Pancreas (tissue), 10 donors: ENCODE measurements at regions of chr2 and their contacts with region 1.

Region 1: DNA sequence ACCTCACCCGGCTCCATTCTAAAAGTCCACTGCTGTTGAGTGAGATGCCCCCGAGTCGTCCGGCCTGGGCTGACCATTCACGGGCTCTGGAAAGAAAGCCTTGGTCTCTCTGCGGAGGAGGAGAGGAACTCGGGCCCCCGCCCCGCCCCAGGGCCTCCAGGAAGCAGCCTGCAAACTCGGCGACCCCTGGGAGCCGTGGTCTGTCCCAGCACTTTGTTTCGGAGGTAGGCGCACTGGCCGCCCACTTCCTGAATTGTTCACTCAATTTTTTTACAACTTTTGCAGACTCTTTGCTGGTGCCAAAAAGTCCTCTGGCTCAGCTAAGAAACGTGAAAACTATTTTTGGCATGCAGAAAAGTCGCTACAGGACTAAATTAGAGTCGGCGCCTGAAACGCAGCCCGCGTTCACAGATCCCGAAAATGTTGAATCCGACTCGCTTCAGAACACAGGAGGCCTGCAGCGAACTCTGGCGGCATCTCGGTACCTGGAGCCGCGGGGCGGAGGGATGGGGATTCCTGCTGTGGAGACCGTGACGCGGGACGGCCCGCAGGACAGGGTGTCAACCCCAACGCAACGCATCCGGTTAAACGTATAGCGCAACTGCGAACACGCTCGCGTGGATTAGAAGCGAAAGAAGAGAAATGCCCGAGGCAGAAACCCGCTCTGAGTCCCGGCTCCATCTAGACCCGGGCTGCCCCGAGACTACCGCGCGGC is 1.5 kb downstream of the PXDN start:
- DNase-seq: peak in 2 of 6 donors; percentile 36 to 38
- ATAC-seq: peak; percentile 30 to 83 (median 72)
- H3K4me3 ChIP-seq: peak overlapping the region; percentile 18 to 50 (median 20)
- H3K27ac ChIP-seq: peak overlapping the region in 2 of 4 donors; percentile 59 to 63
- H3K4me1 ChIP-seq: no peaks in the 10 kb centered on the region
- H3K27me3 ChIP-seq: peaks cover 0 to 6% (median 0%) of the 10 kb centered on the region in 4 donors
- CTCF ChIP-seq: no peak

Region 2: GRCh38 chr2:1591978-1592907 is 150.6 kb before region 1 on chr2:
- intact Hi-C with region 1: loop called in 1 of 3 experiments (anchors 10 kb)
- DNase-seq: peak in 4 of 6 donors; percentile 45 to 70 (median 64)
- ATAC-seq: peak; percentile 61 to 82 (median 79)
- H3K4me3 ChIP-seq: no peak overlapping the region
- H3K27ac ChIP-seq: no peak overlapping the region
- H3K4me1 ChIP-seq: no peaks in the 10 kb centered on the region
- H3K27me3 ChIP-seq: no peaks in the 10 kb centered on the region
- CTCF ChIP-seq: peak in 1 of 4 donors; percentile 13